Activated T-helper 2 cell treated with anti-CD3 and anti-CD28 coated beads, Interferon-gamma antibody, Interleukin-2, Interleukin-4, amounts not matched to agents 10 μg/mL and 5 μg/mL and 100 μg/mL, durations not matched to agents 14 hours and 24 hours and 36 hours (primary cell): ENCODE measurements at regions of chr5 and their contacts with region 1.

Region 1: DNA sequence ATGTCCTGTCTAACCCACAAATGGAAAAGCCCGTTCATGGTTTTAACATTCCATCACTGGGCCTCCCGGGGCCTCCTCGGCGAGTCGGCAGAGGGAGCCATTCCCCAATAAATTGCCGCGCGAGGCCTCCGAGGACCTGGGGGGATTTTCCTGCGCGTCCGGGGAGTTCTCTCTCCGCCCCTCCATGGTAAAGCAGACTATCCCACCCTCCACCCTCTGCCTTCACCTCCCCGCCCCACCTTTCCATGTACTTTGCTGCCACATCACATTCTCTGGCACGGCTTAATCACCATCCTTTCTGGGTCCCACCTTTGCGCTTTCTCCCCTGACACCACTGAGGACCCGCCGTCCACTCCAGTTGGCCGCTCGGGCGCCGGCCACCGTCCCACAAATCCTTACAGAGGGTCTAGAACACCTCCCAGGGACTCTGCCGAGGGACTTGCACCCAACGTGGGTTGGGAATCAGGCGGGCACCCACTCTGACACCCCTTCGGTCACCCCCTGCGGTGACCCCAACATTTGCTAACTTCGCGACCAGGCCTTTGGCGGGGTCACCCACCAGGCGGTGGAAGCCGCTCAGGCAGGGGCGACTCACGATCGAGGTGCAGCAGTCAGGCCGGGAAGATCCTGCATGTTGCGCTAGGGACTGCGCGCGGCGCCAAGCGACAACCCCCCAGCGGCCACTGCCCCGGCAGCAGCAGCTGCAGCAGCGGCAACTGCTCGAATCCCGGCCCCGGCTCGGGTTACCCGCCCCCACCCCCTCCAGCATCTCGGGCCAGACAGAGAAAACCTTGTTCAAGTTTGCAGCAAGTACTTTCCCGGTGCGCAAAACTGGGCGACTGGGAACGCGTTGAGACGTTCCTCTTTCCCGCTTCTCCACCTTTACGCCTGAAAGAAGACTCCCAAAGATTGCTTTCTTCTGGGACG is at the start of gene MEGF10:
- DNase-seq: no peak
- H3K4me3 Mint-ChIP-seq: no peak within 1 kb of the TSS
- H3K27ac Mint-ChIP-seq: no peak within 1 kb of the TSS
- H3K4me1 Mint-ChIP-seq: no peaks in the 10 kb centered on the region
- H3K27me3 Mint-ChIP-seq: peaks cover 73% of the 10 kb centered on the region
- total RNA-seq, gene MEGF10: not detected in 2 replicates

Region 2: DNA sequence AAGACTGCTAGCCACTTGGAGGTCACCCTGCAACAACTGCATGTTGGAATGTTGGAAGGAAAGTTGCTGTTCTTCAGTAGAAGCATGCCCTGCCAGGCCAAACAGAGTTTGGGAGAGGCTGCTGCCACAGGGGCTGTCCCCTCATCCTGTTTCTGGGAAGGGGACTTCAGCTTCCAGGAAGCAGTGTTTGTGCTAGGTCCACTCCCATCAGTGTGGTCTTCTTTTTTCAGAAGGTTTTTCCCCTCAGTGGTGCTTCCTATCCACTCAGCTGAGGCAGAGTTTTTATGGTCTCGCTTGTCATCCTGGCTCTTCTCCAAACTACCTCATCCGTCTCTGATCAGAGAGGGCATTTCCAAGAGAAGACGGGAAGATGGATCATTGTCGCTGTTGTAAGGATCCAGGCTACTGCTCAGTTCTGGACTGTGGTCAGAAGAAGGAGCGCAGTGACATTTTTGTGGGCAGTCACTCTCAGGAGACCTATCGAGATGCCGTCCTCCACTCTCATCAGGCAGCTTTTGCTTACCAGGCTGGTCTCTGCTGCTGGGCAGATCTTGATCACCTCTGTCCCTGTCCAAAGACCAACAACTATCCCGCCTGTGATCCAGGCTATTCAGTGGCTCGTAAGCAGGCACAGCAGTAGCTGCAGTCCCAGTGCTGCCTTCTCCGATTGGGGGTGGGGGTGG is 119.2 kb before region 1 on chr5:
- intact Hi-C with region 1: no loop called
- DNase-seq: no peak
- H3K4me3 Mint-ChIP-seq: no peak overlapping the region
- H3K27ac Mint-ChIP-seq: no peak overlapping the region
- H3K4me1 Mint-ChIP-seq: no peaks in the 10 kb centered on the region
- H3K27me3 Mint-ChIP-seq: no peaks in the 10 kb centered on the region

Region 3: DNA sequence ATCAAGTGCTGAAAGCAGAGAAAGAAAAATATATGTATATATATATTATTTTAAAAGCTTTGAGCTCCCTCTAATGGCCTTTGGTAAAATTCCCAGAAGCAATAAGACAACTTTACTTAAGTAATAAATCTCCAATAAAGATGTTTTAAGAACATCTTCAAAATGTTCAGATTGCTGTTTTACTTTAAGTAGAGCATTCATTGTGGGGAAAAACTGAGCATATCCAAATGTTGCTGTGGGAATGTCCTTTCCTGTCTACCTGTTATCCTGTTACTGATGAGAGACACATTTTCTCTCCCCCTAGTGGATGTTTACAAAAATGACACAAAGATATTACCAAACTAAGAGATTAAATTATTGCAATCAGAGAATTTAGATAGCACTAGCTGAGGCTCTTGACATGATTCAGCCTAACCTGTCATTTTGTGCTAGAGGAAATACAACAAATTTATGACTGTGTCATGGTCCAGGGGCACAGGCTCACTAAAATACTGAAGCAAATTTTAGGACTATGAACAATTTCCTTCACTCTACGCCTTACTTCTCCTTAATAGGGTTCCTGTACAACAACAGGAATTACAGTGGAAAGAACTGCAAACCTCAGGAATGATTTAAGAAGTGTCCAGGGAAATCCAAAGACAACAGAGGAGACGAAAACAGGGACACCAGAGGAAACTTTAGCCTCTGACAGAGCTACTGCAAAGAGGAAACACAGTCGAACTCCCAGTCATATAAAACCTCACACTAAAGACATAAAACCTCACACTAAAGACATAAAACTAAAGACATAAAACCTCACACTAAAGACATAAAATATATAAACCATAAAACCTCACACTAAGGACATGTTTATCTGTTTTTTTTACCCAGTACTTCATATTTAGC is 202.8 kb after region 1 on chr5:
- intact Hi-C with region 1: loop called (anchors 2 kb)
- DNase-seq: no peak
- H3K4me3 Mint-ChIP-seq: no peak overlapping the region
- H3K27ac Mint-ChIP-seq: no peak overlapping the region
- H3K4me1 Mint-ChIP-seq: no peaks in the 10 kb centered on the region
- H3K27me3 Mint-ChIP-seq: peaks cover 31% of the 10 kb centered on the region